Naive thymus-derived CD4-positive, alpha-beta T cell (primary cell): ENCODE measurements at regions of chr11 and their contacts with region 1.

Region 1: DNA sequence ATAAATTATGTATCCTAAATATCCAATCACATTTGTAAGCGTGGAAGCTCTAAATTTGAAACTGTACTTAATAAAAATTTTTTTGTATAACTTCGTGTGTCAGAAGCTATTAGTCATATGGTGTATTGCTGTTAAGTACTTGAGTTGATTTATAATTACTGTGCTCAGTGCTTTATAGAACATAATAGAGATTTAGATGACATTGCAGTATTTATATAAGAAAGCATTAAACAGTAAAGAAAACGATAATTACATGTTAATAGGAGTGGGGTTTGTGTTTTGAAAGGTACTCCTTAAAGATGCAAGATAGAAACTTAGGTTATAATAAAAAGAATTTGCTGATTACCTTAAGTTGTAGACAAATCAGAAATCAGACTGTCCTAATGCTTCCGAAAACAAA is 5.9 kb upstream of the TCP11L1 start:
- DNase-seq: no peak
- ATAC-seq: no peak
- H3K4me3 ChIP-seq: no peak overlapping the region
- H3K4me3 Mint-ChIP-seq: no peak overlapping the region
- H3K27ac ChIP-seq: no peak overlapping the region
- H3K27ac Mint-ChIP-seq: no peak overlapping the region
- H3K4me1 ChIP-seq: no peaks in the 10 kb centered on the region
- H3K4me1 Mint-ChIP-seq: peaks cover 0 to 3% (median 0%) of the 10 kb centered on the region in 7 donors
- H3K27me3 ChIP-seq: no peaks in the 10 kb centered on the region
- H3K27me3 Mint-ChIP-seq: peaks cover 0 to 43% (median 0%) of the 10 kb centered on the region in 5 donors

Region 2: GRCh38 chr11:33021937-33022336 is 11.6 kb before region 1 on chr11:
- CTCF ChIA-PET with region 1: no interaction called
- POLR2A ChIA-PET with region 1: interaction called, 19 read pairs
- intact Hi-C with region 1: no loop called
- DNase-seq: peak in 4 of 9 donors; percentile 20 to 26 (median 22)
- ATAC-seq: peak; percentile 34
- H3K4me3 ChIP-seq: no peak overlapping the region
- H3K4me3 Mint-ChIP-seq: peak overlapping the region in 5 of 10 donors; percentile 13 to 64 (median 32)
- H3K27ac ChIP-seq: no peak overlapping the region
- H3K27ac Mint-ChIP-seq: peak overlapping the region in 5 of 9 donors; percentile 1 to 37 (median 13)
- H3K4me1 ChIP-seq: peaks cover 0 to 8% of the 10 kb centered on the region in 2 donors
- H3K4me1 Mint-ChIP-seq: peaks cover 0 to 43% (median 36%) of the 10 kb centered on the region in 7 donors
- H3K27me3 ChIP-seq: peaks cover 0 to 5% of the 10 kb centered on the region in 2 donors
- H3K27me3 Mint-ChIP-seq: peaks cover 0 to 49% (median 1%) of the 10 kb centered on the region in 5 donors